ENCODE measurements at regions of chr20 and their contacts with region 1.

Region 1: DNA sequence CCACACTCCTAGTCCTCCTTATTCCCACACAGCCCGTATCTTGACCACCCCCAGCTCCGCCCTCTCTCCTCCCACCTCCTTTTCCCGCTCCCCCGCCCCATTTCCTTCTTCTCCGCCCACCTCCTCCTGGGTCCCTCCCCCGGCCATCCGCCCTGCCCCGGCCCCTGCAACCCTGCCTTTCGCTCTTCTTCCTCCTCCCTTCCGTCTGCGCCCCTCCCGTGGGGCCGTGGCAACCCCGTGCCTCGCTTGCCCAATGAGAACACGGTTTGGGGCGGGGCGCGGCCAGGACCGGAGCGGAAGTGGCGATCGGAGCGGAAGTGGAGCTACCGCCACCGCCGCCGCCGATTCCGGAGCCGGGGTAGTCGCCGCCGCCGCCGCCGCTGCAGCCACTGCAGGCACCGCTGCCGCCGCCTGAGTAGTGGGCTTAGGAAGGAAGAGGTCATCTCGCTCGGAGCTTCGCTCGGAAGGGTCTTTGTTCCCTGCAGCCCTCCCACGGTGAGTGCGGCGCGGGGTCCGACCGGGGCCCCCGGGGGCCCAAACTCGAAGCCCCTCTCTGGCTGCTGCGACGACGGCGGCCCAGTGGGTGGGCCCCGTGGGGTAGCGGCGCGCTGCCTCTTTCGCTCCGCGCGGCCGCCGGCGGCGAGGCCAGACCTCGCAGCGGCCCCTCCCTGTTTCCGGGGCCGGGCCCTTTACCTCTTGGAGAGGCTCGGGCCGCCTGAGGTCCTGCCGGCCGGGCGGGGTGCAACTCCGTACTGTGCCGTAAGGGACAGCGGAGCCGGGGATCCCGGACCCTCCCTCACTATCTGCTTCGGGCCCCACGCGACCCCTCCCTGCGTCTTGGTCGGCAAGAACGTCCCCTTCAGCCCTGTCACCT is at the start of gene YWHAB:
- H3K4me3 Mint-ChIP-seq: peak within 1 kb of the TSS; percentile 93
- H3K27ac Mint-ChIP-seq: peak within 1 kb of the TSS; percentile 91
- H3K4me1 Mint-ChIP-seq: peaks cover 46% of the 10 kb centered on the region
- H3K27me3 Mint-ChIP-seq: no peaks in the 10 kb centered on the region

Region 2: DNA sequence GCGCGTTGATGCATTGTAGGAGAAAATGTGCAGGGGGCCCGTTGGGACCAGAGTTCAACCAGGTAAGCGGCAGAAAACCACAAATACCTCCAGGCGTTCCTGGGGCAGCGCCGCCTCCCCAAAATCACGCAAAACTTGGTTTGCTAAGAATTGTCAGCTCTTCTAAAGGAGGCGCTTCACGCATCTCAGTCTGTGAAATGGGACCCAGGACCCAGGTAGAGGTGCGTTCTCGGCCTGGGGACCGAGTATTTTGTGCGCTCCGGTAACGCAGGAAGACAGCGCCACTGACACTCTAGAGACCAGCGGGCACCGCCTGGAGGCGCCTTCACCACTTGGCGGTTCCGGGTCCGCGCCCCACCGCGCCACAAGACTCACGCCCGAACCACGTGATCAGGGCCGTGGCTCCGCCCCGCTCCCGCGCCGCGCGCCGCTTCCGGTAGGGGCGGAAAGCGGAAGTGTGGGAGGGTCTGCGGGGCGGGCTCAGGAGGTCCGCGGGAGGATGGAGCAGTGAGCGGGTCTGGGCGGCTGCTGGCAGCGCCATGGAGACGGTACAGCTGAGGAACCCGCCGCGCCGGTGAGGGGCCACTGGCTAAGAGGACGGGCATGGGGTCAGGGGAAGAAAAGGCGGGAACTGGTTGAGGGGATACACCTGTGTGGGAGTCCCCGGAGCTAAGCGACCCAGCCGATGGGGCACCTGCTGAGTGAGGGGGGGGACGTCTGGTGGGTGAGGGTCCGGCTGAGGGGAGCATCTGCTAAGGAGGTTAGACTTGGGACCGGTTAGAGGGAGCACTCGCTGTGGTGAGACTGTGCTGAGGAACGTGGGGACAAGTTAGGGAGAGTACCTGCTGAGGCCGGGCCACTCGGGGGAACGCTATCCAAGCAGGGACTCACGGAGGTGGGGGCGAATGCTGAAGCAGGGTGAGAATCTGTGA is 80.7 kb after region 1 on chr20 and contains the start of gene STK4:
- intact Hi-C with region 1: loop called (anchors 5 kb)
- H3K4me3 Mint-ChIP-seq: peak within 1 kb of the TSS; percentile 96
- H3K27ac Mint-ChIP-seq: peak within 1 kb of the TSS; percentile 91
- H3K4me1 Mint-ChIP-seq: peaks cover 55% of the 10 kb centered on the region
- H3K27me3 Mint-ChIP-seq: no peaks in the 10 kb centered on the region